GM12878 (cell line): ENCODE measurements at regions of chr3 and their contacts with region 1.

Region 1: GRCh38 chr3:4712143-4712542 is 219.0 kb downstream of the ITPR1 start:
- DNase-seq: no peak
- ATAC-seq: no peak
- H3K4me3 ChIP-seq: no peak overlapping the region
- H3K27ac ChIP-seq: no peak overlapping the region
- H3K4me1 ChIP-seq: no peaks in the 10 kb centered on the region
- H3K27me3 ChIP-seq: no peaks in the 10 kb centered on the region
- CTCF ChIP-seq: no peak
- EP300 ChIP-seq: no peak
- POLR2A ChIP-seq: no peak
- RAD21 ChIP-seq: no peak

Region 2: GRCh38 chr3:4438293-4438692 is 273.9 kb before region 1 on chr3:
- CTCF ChIA-PET with region 1: no interaction called
- POLR2A ChIA-PET with region 1: no interaction called
- RAD21 ChIA-PET with region 1: no interaction called
- SMC1A ChIA-PET with region 1: no interaction called
- in situ Hi-C with region 1: no loop called
- intact Hi-C with region 1: no loop called
- DNase-seq: no peak
- ATAC-seq: no peak
- H3K4me3 ChIP-seq: no peak overlapping the region
- H3K27ac ChIP-seq: no peak overlapping the region
- H3K4me1 ChIP-seq: no peaks in the 10 kb centered on the region
- H3K27me3 ChIP-seq: no peaks in the 10 kb centered on the region
- CTCF ChIP-seq: no peak
- EP300 ChIP-seq: no peak
- POLR2A ChIP-seq: no peak
- RAD21 ChIP-seq: no peak

Region 3: DNA sequence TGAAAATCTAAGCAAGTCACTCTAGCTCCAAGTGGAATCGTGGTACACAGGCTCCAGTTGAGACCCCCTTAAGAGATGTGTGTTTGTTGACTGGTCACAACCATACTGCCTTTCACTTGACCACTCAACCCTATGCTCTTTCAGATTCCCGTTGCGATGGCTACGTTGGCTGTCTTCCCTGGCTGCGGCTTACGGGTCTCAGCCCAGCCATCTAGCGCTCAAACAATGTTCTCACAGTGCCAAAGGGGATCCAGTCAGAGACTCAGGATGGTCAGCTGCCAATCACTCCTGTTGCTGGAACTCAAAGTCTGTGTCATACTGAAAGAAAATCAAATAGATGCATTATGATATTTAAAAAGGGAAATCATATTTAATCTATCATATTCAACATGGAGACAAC is 18.6 kb after region 1 on chr3:
- CTCF ChIA-PET with region 1: interaction called, 12 read pairs
- POLR2A ChIA-PET with region 1: interaction called, 3 read pairs
- RAD21 ChIA-PET with region 1: interaction called, 6 read pairs
- SMC1A ChIA-PET with region 1: interaction called, 15 read pairs
- in situ Hi-C with region 1: no loop called
- intact Hi-C with region 1: no loop called
- DNase-seq: no peak
- ATAC-seq: no peak
- H3K4me3 ChIP-seq: no peak overlapping the region
- H3K27ac ChIP-seq: no peak overlapping the region
- H3K4me1 ChIP-seq: no peaks in the 10 kb centered on the region
- H3K27me3 ChIP-seq: no peaks in the 10 kb centered on the region
- CTCF ChIP-seq: no peak
- EP300 ChIP-seq: no peak
- POLR2A ChIP-seq: no peak
- RAD21 ChIP-seq: no peak

Region 4: GRCh38 chr3:4786431-4786830 is 74.3 kb after region 1 on chr3:
- CTCF ChIA-PET with region 1: interaction called, 6 read pairs
- POLR2A ChIA-PET with region 1: no interaction called
- RAD21 ChIA-PET with region 1: interaction called, 6 read pairs
- SMC1A ChIA-PET with region 1: interaction called, 11 read pairs
- in situ Hi-C with region 1: no loop called
- intact Hi-C with region 1: no loop called
- DNase-seq: no peak
- ATAC-seq: no peak
- H3K4me3 ChIP-seq: no peak overlapping the region
- H3K27ac ChIP-seq: no peak overlapping the region
- H3K4me1 ChIP-seq: no peaks in the 10 kb centered on the region
- H3K27me3 ChIP-seq: no peaks in the 10 kb centered on the region
- CTCF ChIP-seq: no peak
- EP300 ChIP-seq: no peak
- POLR2A ChIP-seq: no peak
- RAD21 ChIP-seq: no peak

Region 5: DNA sequence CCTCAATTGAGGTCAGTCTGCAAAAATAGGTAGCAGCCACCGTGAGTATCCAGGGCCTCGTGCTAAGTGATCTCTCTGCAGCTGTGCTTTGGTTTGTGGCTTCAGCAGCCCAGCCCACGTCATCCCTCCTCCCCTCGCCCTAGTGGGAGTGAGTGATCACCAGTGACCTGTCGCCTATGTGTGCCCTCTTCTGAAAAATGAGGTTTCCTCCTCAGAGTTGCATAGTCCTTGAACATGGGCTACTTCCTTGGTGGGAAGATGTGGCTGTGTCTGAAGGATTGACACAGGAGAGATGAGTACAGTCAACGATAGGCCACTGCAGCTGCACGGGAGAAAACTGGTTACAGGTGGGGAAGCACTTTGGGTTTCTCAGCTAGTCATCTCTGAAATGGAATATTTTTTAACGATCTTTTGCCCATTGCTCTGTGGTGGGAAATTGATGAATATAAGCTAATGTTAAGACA is 122.3 kb after region 1 on chr3:
- CTCF ChIA-PET with region 1: interaction called, 8 read pairs
- POLR2A ChIA-PET with region 1: no interaction called
- RAD21 ChIA-PET with region 1: interaction called, 11 read pairs
- SMC1A ChIA-PET with region 1: interaction called, 5 read pairs
- in situ Hi-C with region 1: no loop called
- intact Hi-C with region 1: no loop called
- DNase-seq: no peak
- ATAC-seq: peak; percentile 63
- H3K4me3 ChIP-seq: no peak overlapping the region
- H3K27ac ChIP-seq: peak overlapping the region; percentile 43; the same call in 1 of the 2 replicates
- H3K4me1 ChIP-seq: peaks cover 43% of the 10 kb centered on the region
- H3K27me3 ChIP-seq: no peaks in the 10 kb centered on the region
- CTCF ChIP-seq: no peak
- EP300 ChIP-seq: peak; percentile 89 to 95; a peak in 3 of 4 replicates
- POLR2A ChIP-seq: no peak
- RAD21 ChIP-seq: 0 out of 2 replicates have a peak, but pooled peaks have one; percentile 4

Region 6: DNA sequence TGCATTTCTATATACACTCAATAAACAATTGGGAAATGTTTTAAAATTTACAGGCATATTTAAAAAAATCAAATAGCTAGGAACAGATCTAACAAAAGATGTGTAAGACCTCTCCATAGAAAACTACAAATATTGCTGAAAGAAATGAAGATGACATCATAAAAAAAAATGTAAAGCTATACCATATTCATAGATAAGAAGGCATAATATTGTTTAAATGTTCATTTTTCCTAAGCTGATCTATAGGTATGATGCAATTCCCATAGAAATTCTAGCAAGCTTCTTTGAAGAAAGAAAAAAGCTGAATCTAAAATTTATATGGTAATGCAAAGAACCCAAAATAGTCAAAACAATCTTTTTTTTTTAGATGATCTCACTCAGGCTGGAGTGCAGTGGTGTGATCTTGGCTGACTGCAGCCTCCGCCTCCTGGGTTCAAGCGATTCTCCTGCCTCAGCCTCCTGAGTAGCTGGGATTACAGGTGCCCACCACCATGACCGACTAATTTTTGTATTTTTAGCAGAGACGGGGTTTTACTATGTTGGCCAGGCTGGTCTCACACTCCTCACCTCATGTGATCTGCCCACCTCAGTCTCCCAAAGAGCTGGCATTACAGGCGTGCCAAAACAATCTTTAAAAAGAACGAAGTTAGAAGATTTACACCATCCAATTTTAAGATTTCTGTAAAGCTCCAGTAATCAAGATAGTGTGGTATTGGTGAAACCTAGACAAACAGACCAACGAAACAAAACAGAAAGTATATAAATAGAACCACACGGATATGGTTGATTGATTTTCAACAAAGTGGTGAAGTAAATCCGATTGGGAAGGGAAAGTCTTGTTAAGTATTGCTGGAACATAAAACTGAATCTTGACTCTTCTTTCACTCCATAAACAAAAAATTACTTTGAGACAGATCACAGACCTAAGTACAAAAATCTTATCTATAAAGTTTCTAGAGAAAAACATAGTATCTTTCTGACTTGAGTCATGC is 260.8 kb after region 1 on chr3:
- CTCF ChIA-PET with region 1: interaction called, 81 read pairs
- POLR2A ChIA-PET with region 1: interaction called, 4 read pairs
- RAD21 ChIA-PET with region 1: interaction called, 52 read pairs
- SMC1A ChIA-PET with region 1: interaction called, 44 read pairs
- in situ Hi-C with region 1: no loop called
- intact Hi-C with region 1: loop called (anchors 2 kb)
- DNase-seq: peak; percentile 68
- ATAC-seq: peak; percentile 23
- H3K4me3 ChIP-seq: peak overlapping the region; percentile 37; the same call in 1 of the 2 replicates
- H3K27ac ChIP-seq: peak overlapping the region; percentile 45
- H3K4me1 ChIP-seq: peaks cover 29% of the 10 kb centered on the region
- H3K27me3 ChIP-seq: no peaks in the 10 kb centered on the region
- CTCF ChIP-seq: no peak
- EP300 ChIP-seq: peak; percentile 60 to 86; a peak in 3 of 4 replicates
- POLR2A ChIP-seq: no peak
- RAD21 ChIP-seq: no peak

Region 7: GRCh38 chr3:5035692-5036391 is 323.7 kb after region 1 on chr3:
- CTCF ChIA-PET with region 1: interaction called, 14 read pairs
- POLR2A ChIA-PET with region 1: no interaction called
- RAD21 ChIA-PET with region 1: interaction called, 8 read pairs
- SMC1A ChIA-PET with region 1: interaction called, 9 read pairs
- in situ Hi-C with region 1: no loop called
- intact Hi-C with region 1: no loop called
- DNase-seq: no peak
- ATAC-seq: peak; percentile 72
- H3K4me3 ChIP-seq: no peak overlapping the region
- H3K27ac ChIP-seq: no peak overlapping the region
- H3K4me1 ChIP-seq: peaks cover 14% of the 10 kb centered on the region
- H3K27me3 ChIP-seq: no peaks in the 10 kb centered on the region
- CTCF ChIP-seq: no peak
- EP300 ChIP-seq: no peak
- POLR2A ChIP-seq: no peak
- RAD21 ChIP-seq: no peak

Region 8: DNA sequence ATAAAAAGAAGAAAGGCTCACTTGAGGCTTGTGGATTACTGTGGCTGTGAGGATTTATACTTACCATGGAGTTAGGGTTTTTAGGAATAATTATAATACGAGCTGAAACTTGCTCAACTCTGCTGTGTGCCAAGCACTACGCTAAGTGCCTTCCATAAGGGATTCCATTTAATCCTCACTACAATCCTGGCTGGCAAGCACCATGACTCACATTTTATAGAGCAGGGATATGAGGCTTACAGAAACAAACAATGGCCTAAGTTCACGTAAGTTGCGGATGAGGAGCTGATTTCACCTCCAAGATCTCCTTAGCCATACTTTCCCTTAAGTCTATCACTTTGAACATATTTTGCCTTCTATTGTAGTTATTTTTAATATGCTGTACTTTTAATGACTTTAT is 366.0 kb after region 1 on chr3:
- CTCF ChIA-PET with region 1: interaction called, 13 read pairs
- POLR2A ChIA-PET with region 1: no interaction called
- RAD21 ChIA-PET with region 1: interaction called, 6 read pairs
- SMC1A ChIA-PET with region 1: interaction called, 6 read pairs
- in situ Hi-C with region 1: no loop called
- intact Hi-C with region 1: no loop called
- DNase-seq: no peak
- ATAC-seq: no peak
- H3K4me3 ChIP-seq: no peak overlapping the region
- H3K27ac ChIP-seq: no peak overlapping the region
- H3K4me1 ChIP-seq: no peaks in the 10 kb centered on the region
- H3K27me3 ChIP-seq: peaks cover 0 to 2% of the 10 kb centered on the region in 2 experiments; a peak in 2 of 4 replicates
- CTCF ChIP-seq: no peak
- EP300 ChIP-seq: no peak
- POLR2A ChIP-seq: no peak
- RAD21 ChIP-seq: no peak